ENCODE measurements at regions of chr9 and their contacts with region 1.

Region 1: DNA sequence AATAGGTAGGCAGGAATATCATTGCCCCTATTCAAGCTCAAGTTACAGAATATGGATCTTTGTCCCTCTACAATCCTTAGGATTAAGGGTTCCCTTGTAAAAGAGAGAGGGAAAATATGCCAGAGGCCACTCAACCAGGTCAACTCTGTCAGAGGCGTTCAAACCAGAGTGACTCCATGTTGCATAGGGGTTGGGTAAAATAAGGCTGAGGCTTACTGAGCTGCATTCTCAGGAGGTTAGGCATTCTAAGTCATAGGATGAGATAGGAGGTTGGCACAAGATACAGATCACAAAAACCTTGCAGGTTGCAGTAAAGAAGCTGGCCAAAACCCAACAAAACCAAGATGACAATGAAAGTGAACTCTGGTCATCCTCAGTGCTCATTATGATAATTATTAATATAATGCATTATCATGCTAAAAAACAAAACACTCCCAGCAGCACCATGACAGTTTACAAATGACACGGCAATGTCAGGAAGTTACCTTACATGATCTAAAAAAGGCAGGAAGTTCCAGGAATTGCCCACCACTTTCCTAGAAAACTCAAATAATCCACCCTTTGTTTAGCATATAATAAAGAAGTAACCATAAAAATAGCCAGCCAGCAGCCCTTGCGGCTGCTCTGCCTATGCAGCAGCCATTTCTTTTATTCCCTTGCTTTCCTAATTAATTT is 64.8 kb downstream of the ERP44 start:
- DNase-seq: no peak
- ATAC-seq: no peak
- H3K4me3 Mint-ChIP-seq: no peak overlapping the region
- H3K27ac Mint-ChIP-seq: no peak overlapping the region
- H3K4me1 Mint-ChIP-seq: peaks cover 34% of the 10 kb centered on the region
- H3K27me3 Mint-ChIP-seq: no peaks in the 10 kb centered on the region
- CTCF ChIP-seq: no peak

Region 2: GRCh38 chr9:100216178-100216787 is 182.3 kb after region 1 on chr9:
- CTCF ChIA-PET with region 1: interaction called, 22 read pairs
- POLR2A ChIA-PET with region 1: no interaction called
- intact Hi-C with region 1: no loop called
- DNase-seq: peak; percentile 37
- ATAC-seq: peak; percentile 87
- H3K4me3 Mint-ChIP-seq: no peak overlapping the region
- H3K27ac Mint-ChIP-seq: no peak overlapping the region
- H3K4me1 Mint-ChIP-seq: no peaks in the 10 kb centered on the region
- H3K27me3 Mint-ChIP-seq: no peaks in the 10 kb centered on the region
- CTCF ChIP-seq: no peak